ENCODE measurements at regions of chr12 and their contacts with region 1.

Region 1: DNA sequence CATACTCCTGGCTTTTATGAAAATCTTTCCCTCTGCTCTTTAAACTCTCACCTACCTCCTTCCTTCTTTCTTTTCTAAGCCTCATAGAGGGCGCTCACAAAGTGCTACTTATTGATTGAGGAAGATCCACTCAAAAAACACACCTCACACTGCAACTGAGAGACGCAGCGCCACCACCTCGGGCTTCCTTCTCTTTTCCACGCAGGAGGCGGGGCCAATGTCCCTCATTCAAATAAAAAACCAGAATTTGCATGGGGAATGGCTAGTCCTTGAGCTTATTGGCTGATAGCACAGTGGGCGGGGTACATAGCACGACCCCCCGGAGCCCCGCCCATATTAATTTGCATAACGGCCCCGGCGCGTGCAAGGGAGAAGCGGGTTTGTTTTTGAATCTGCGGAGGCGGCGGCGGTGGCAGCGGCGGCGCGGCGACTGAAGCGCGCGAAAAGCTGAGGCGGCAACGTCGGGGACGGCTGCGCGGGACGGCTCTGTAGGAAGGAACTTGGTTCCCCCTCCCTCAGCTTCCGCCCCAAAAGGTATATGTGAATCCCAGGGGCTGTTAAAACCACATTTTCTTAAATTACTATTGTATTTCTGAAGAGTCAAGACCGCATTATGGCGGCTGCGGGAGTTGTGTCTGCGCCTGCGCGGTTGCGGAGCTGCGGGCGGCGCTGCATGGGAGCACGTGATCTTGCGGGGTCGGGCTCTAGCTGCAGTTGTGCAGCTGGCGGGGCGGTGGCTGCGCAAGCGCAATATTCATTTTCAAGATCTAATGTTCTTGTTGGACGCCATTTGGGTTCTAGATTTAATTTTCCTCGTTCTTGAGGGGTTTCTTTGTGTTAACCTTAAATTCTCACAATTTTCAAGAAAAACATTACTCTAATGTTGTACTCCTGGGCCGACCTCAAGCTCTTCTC is at the start of gene ATF7IP:
- DNase-seq: peak; percentile 95
- H3K4me3 ChIP-seq: peak within 1 kb of the TSS; percentile 76 to 100 (median 78)
- H3K27ac ChIP-seq: peak within 1 kb of the TSS; percentile 95
- H3K4me1 ChIP-seq: no peaks in the 10 kb centered on the region
- H3K27me3 ChIP-seq: no peaks in the 10 kb centered on the region
- CTCF ChIP-seq: peak; percentile 7 to 36
- total RNA-seq, gene ATF7IP: 33.3 to 41.0 TPM

Region 2: GRCh38 chr12:14185427-14186192 is 179.9 kb before region 1 on chr12:
- CTCF ChIA-PET with region 1: no interaction called
- dilution Hi-C with region 1: no loop called
- in situ Hi-C with region 1: no loop called
- intact Hi-C with region 1: loop called (anchors 5 kb)
- DNase-seq: peak; percentile 37
- H3K4me3 ChIP-seq: no peak overlapping the region
- H3K27ac ChIP-seq: no peak overlapping the region
- H3K4me1 ChIP-seq: no peaks in the 10 kb centered on the region
- H3K27me3 ChIP-seq: no peaks in the 10 kb centered on the region
- CTCF ChIP-seq: peak; percentile 69 to 80

Region 3: GRCh38 chr12:14303661-14304155 is 61.8 kb before region 1 on chr12:
- CTCF ChIA-PET with region 1: no interaction called
- dilution Hi-C with region 1: no loop called
- in situ Hi-C with region 1: no loop called
- intact Hi-C with region 1: no loop called
- DNase-seq: no peak
- H3K4me3 ChIP-seq: no peak overlapping the region
- H3K27ac ChIP-seq: no peak overlapping the region
- H3K4me1 ChIP-seq: no peaks in the 10 kb centered on the region
- H3K27me3 ChIP-seq: no peaks in the 10 kb centered on the region
- CTCF ChIP-seq: no peak

Region 4: DNA sequence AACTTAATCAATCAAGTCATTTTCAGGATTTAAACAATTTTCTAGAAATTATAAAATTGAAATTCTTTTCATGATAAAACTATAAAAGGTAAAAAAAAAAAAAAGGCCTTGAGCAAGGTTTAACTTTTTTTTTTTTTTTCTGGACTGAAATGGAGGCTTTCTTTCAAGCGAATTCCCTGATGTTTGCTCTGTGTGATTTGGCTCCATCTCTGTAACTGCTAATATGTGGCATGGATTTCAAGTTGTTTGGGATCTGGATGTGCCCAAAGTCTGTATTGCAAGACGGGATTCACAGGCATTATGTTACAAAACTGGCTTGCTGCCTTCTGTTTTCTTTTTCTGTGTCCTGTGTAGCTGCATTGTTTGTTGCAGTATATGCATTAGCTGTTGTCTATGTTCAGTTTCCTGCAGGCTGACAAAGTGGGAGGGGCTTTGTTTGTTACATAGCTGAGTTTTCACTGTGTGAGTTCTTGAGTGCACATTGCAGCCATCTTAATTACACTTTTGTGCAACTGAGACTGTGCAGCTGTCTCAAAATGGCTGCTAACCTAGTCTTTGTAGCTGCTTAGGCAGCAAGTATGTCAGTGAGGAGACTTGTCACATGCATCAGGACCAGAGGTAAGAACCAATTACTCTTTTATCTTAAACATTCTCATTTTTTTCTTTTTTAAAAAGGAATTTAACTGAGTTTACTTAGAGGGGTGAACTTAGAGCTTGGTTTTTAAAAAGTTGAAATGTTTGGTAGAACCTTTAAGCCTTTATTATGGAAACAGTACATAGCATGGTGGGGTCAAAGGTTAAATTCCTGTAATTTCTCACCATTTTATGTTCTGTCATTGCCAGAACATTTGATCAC is 19.5 kb after region 1 on chr12:
- CTCF ChIA-PET with region 1: interaction called, 5 read pairs
- dilution Hi-C with region 1: no loop called
- in situ Hi-C with region 1: no loop called
- intact Hi-C with region 1: loop called (anchors 1 kb)
- DNase-seq: peak; percentile 92
- H3K4me3 ChIP-seq: peak overlapping the region; percentile 29 to 42 (median 31)
- H3K27ac ChIP-seq: peak overlapping the region; percentile 69
- H3K4me1 ChIP-seq: peaks cover 13% of the 10 kb centered on the region
- H3K27me3 ChIP-seq: no peaks in the 10 kb centered on the region
- CTCF ChIP-seq: no peak

Region 5: GRCh38 chr12:14417715-14418114 is 52.2 kb after region 1 on chr12:
- CTCF ChIA-PET with region 1: interaction called, 3 read pairs
- dilution Hi-C with region 1: no loop called
- in situ Hi-C with region 1: no loop called
- intact Hi-C with region 1: loop called (anchors 1 kb)
- DNase-seq: peak; percentile 74
- H3K4me3 ChIP-seq: no peak overlapping the region
- H3K27ac ChIP-seq: no peak overlapping the region
- H3K4me1 ChIP-seq: peaks cover 10% of the 10 kb centered on the region
- H3K27me3 ChIP-seq: no peaks in the 10 kb centered on the region
- CTCF ChIP-seq: no peak

Measured in mammary epithelial cell (primary cell).